ENCODE measurements at regions of chr7 and their contacts with region 1.

Region 1: DNA sequence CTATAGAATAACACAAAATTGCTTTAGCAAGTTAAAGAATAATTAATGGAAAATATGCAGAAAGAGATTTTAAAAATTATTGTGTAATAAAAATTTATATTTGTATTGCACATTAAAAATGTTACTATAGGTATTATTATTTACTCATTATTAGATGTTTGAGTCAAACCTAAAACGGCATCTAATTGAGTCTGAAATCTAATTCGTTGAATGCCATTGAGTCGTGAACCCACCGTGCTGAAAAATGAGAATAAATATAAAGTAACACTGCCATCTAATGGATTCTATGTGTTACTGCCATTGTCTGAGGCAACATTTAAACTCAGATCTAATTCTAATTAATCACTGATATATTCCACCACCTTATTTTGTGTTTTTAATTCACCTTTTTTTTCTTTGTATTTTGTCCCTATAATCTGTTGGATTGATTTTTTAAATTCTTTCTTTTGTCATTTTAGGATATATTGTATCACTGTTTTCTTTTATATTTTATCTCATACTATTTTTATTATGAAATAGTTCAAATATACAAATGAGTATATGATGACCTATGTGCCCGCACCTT is 62.2 kb downstream of the SAMD9 start:
- DNase-seq: peak; percentile 61
- CTCF ChIP-seq: peak; percentile 27

Region 2: DNA sequence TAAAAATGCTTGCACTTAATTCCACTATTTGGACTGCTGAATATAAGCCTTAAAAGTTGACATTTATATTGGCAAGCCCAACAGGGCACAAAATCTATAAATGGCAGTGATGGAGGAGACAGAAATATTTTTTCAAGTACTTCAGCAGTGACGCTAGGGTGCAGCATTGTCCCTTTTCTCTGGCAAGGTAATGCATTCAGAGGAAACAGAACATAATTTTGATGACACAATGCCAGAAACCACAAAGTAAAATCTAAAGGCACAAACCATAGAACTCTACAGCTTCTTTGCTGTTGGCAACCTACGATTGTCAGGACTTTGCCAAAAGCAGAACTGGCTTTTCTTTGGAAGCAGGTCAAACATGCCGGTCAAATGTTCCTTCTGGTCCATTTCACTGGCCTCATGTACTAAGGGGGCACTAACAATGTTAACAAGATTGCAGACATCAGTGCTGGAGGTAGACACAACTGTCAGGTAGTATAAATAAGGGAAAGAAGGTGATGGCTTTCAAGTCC is 434.5 kb before region 1 on chr7:
- in situ Hi-C with region 1: loop called (anchors 10 kb)
- DNase-seq: peak; percentile 37
- CTCF ChIP-seq: peak; percentile 49

Region 3: DNA sequence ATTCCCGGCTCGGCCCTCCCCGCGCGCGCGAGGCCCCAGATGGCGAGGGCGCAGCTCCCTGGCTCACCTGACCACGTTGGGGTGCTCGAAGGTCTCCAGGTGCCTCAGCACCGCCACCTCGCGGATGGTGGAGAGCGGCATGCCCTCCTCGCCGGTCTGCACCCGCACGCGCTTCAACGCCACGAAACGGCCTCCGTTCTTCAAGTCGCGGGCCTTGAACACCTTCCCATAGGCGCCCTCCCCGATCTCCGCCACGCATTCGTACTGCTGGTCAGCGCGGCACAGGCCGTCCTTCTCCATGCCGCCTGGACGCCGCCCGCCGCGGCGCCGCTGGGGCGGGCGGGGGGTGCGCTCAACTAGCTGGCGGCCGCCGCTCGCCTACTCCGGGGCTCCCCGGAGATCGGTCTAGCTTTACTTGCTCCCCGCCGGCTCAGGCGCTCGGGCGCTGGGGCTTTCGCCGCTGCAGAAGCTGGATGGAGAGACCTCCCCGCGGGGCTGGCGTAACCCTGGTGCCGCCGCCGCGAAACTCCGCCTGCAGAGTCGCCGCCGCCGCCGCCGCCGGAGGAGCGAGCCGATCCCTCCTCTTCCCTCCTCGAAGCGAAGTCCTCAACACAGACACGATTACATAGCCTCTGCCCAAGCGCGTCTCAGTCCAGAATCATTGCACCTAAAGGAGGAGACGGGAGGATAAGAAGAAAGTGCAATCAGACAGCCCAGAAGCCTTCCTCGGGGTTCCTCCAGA is 222.4 kb before region 1 on chr7:
- in situ Hi-C with region 1: loop called (anchors 5 kb)
- DNase-seq: peak; percentile 82
- CTCF ChIP-seq: peak; percentile 89

Region 4: GRCh38 chr7:93150200-93150835 is 94.7 kb after region 1 on chr7:
- in situ Hi-C with region 1: no loop called
- DNase-seq: no peak
- CTCF ChIP-seq: no peak